Prostate gland (tissue), 2 donors: ENCODE measurements at regions of chr3 and their contacts with region 1.

Region 1: DNA sequence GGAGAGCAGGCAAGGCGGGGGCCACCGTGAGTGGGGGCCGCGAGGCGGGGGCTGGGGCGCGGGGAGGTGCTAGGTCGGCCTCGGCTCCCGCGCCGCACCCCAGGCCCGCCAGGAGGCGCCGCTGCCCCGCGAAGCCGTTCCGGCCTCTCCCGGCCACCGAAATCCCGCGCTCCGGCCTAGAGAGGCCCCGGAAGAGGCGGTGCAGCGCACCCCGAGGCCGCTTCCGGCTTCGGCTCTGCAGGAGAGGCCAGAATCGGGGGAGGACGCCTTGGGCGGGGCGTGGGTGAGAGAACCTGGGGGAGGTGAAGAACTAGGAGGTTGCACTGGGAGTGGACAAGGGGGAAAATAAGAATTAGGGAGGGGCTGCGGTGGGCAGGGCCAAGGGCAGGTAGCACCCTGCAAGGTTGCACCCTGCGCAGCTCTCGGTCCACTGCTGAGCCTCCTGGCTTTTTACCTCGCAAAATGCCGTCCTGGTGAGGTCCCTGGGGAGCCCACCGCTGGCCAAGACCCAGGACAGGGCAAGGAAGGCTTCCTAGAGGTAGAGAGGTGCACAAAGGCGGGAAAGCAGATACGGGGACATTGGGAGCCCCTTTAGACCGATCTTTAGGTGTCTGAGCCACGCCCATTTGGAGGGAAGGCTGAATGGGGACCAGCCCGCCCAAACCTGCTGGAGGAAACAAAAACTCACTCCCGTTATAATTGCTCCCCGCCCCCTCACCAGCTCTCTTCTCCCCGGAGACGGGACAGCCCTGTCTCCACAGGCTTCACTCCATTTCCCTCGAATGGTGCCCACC is 8.4 kb upstream of the GNAI2 start:
- DNase-seq: peak; percentile 93
- H3K4me3 ChIP-seq: peak overlapping the region; percentile 44 to 54
- H3K27ac ChIP-seq: peak overlapping the region; percentile 61 to 73
- H3K4me1 ChIP-seq: no peaks in the 10 kb centered on the region
- H3K27me3 ChIP-seq: no peaks in the 10 kb centered on the region
- CTCF ChIP-seq: peak; percentile 86 to 98 (median 94)
- POLR2A ChIP-seq: peak; percentile 65

Region 2: GRCh38 chr3:50192689-50193141 is 34.9 kb before region 1 on chr3:
- intact Hi-C with region 1: loop called (anchors 1 kb)
- DNase-seq: peak; percentile 58
- H3K4me3 ChIP-seq: no peak overlapping the region
- H3K27ac ChIP-seq: no peak overlapping the region
- H3K4me1 ChIP-seq: no peaks in the 10 kb centered on the region
- H3K27me3 ChIP-seq: peaks cover 9% of the 10 kb centered on the region
- CTCF ChIP-seq: peak; percentile 82 to 93 (median 89)
- POLR2A ChIP-seq: no peak

Region 3: DNA sequence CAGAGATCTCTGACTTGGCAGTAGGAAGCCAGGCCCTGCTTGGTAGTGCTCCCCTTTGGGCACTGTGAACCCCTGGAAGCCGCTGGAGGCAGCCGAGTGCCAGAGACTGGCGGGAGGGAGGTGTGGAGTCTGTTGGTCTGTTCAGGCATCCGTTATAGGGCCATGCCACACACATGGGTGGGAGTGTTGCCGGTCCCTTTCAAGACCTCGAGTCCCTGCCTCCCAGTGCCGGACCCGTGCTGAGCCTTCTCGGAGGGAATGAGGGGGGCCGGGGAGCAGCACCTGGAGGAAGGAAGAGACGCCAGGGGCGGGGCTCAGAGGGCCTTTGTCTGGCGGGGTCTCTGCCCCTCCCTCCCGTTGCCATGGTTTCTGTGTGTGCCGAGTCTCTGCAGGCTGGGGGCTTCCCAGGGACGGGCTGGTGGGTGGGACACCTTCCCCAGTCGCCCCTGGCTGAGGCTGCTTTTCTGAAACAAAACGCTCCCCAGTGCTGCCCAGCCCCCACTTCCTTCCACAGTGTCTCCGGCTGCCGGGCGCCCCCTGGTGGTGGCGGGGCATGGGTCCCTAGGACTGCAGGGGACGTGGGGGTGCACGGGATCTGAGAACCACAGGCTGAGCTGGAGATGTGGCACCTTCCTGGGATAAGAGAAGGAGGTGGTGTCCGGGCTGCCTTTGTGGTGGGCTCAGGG is 18.4 kb after region 1 on chr3:
- intact Hi-C with region 1: loop called (anchors 1 kb)
- DNase-seq: peak; percentile 84
- H3K4me3 ChIP-seq: peak overlapping the region; percentile 10 to 32
- H3K27ac ChIP-seq: peak overlapping the region; percentile 62 to 63
- H3K4me1 ChIP-seq: peaks cover 4% of the 10 kb centered on the region
- H3K27me3 ChIP-seq: no peaks in the 10 kb centered on the region
- CTCF ChIP-seq: peak; percentile 98 to 99 (median 99)
- POLR2A ChIP-seq: no peak

Region 4: GRCh38 chr3:50272911-50273693 is 45.5 kb after region 1 on chr3:
- intact Hi-C with region 1: loop called (anchors 1 kb)
- DNase-seq: peak; percentile 78
- H3K4me3 ChIP-seq: peak overlapping the region in 1 of 2 donors; percentile 19
- H3K27ac ChIP-seq: no peak overlapping the region
- H3K4me1 ChIP-seq: peaks cover 13% of the 10 kb centered on the region
- H3K27me3 ChIP-seq: no peaks in the 10 kb centered on the region
- CTCF ChIP-seq: peak; percentile 84 to 100 (median 99)
- POLR2A ChIP-seq: no peak

Region 5: GRCh38 chr3:50486219-50486888 is 258.8 kb after region 1 on chr3:
- intact Hi-C with region 1: no loop called
- DNase-seq: no peak
- H3K4me3 ChIP-seq: no peak overlapping the region
- H3K27ac ChIP-seq: no peak overlapping the region
- H3K4me1 ChIP-seq: no peaks in the 10 kb centered on the region
- H3K27me3 ChIP-seq: no peaks in the 10 kb centered on the region
- CTCF ChIP-seq: no peak
- POLR2A ChIP-seq: no peak